OCI-LY7 (cell line): ENCODE measurements at regions of chr18 and their contacts with region 1.

Region 1: DNA sequence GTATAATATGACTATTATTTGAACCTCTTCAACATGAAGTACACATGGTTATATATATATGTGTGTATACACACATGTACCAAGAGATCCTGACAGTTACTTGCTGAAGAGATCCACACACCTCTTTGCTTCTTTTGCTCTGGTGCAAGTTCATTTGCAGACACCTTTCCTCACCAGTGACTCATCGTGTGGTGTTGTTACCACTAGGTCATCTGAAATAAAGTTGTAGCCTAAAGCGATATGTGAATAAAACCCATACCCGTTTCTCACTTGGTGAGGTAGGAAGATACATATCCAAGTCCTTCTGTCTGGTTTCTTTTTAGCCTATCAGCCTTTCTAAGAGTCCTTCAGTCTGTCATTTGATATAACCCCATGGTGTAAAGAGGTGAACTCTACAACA is 379.5 kb upstream of the RAB12 start:
- DNase-seq: no peak
- H3K4me3 ChIP-seq: no peak overlapping the region
- H3K27ac ChIP-seq: no peak overlapping the region
- H3K4me1 ChIP-seq: no peaks in the 10 kb centered on the region
- CTCF ChIP-seq: no peak

Region 2: GRCh38 chr18:8177330-8178016 is 52.3 kb before region 1 on chr18:
- CTCF ChIA-PET with region 1: no interaction called
- POLR2A ChIA-PET with region 1: no interaction called
- intact Hi-C with region 1: loop called (anchors 10 kb)
- DNase-seq: no peak
- H3K4me3 ChIP-seq: no peak overlapping the region
- H3K27ac ChIP-seq: no peak overlapping the region
- H3K4me1 ChIP-seq: no peaks in the 10 kb centered on the region
- CTCF ChIP-seq: no peak

Region 3: GRCh38 chr18:8525692-8526091 is 295.9 kb after region 1 on chr18:
- CTCF ChIA-PET with region 1: no interaction called
- POLR2A ChIA-PET with region 1: no interaction called
- intact Hi-C with region 1: no loop called
- DNase-seq: peak; percentile 12
- H3K4me3 ChIP-seq: no peak overlapping the region
- H3K27ac ChIP-seq: no peak overlapping the region
- H3K4me1 ChIP-seq: no peaks in the 10 kb centered on the region
- CTCF ChIP-seq: peak; percentile 51; the same call in 1 of the 2 replicates